ENCODE measurements at regions of chr6 and their contacts with region 1.

Region 1: DNA sequence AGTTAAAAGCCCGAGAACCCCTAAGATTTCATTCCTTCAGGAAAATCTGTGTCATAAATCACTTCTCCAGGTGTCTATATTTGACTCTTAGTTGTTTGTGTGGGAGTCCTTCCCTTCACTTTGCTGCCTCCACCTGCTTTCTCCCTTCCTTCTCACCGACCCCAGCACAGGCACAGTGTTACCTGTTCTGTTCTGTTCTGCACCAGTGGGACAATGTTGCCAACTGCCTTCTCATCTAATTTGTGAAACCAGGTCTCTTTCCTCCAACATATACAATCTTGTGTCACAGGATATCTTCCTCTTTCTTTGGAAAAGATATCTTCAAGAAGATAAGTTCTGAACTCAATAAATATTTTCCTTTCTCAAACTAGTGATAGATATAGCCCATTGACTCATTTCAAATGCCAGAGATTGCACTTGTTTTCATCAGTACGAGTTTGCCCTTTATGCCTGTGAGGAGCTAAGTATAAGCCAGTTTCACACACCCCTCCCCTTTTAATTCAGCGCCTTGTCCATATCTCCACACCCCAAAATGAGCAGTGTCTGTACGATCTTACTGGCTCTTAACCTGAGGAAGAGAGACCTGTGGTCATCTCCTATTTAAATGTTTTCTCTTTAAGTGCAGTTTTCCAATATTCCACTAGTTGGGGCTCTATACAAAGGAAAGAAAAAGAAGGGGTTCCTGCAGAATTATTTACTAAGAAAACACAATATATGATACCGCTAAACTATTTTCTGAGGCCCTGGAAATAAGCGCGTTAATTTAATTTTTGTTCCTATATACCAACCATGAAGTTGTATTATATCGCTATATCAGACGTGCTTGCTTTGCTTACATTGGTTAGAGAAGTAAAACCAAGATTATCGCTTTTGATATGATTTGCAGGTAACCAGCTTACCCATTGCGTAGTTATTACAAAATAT is 81.6 kb upstream of the PREP start:
- DNase-seq: no peak
- ATAC-seq: peak; percentile 66

Region 2: DNA sequence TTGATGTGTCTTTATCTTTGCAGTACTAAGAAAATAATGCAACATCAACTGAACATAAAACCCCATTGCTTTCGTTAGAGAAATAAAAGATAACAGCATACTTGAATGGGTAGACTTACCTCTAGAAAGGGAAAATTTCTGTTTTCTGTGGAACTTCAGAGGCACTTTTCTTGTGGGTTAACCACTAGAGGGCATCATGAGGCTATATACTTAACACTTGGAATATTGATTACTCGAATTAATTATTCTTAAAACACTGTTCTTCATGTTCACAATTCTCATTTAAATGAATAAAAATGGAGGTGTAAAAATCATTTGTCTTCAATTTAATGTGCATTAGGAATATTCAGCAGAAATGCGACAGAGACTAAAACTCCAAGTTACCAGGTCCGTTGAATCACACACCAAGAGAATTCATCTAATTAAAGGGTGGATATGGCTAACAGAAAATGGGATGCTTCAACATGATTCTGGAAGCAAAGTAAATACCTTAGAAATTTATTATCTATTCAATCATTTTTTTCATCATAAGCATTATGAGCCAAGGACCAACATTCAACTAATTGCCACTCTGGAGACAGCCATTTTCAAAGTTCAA is 249.2 kb after region 1 on chr6:
- intact Hi-C with region 1: loop called (anchors 10 kb)
- DNase-seq: no peak
- ATAC-seq: no peak

Region 3: GRCh38 chr6:105992315-105992961 is 507.9 kb after region 1 on chr6:
- intact Hi-C with region 1: loop called (anchors 10 kb)
- DNase-seq: peak; percentile 90
- ATAC-seq: peak; percentile 97

Region 4: GRCh38 chr6:106097411-106098231 is 613.1 kb after region 1 on chr6:
- intact Hi-C with region 1: loop called (anchors 10 kb)
- DNase-seq: no peak
- ATAC-seq: peak; percentile 66

Region 5: DNA sequence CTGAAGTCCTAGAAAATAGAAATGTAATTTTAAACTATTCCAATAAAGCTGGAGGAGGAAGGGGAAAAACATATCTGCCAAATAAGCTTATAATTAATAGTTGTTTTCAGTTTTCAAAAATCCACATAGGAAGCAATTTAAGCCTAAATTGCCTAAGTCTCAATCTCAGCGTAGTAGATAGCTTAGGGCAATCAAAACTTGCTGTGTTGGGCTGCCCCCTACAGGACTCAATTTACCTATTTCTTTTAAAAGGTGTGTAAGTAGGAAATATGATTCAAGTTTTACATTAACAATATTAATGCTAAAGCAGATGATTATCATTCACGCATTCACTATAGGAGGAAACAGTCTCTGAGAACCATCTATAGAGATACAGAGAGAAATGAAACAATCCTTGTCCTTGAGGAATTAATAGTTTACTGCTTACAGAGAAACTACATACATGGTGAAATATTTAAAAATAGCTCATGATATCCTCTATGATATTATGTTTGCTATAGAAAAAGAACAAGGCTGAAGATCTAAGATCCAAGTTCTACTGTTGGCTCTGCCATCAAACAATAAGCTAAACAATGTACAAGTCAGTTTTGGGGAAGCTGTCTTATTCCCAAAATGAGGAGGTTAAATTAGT is 738.9 kb after region 1 on chr6:
- intact Hi-C with region 1: loop called (anchors 5 kb)
- DNase-seq: no peak
- ATAC-seq: peak; percentile 65

Measured in Right ventricle myocardium superior (tissue), 1 donor.